Activated CD8-positive, alpha-beta T cell treated with anti-CD3 and anti-CD28 coated beads, Interleukin-2, amount 10 ng/mL, durations not matched to agents 7 days and 5 days (primary cell): ENCODE measurements at regions of chr3 and their contacts with region 1.

Region 1: DNA sequence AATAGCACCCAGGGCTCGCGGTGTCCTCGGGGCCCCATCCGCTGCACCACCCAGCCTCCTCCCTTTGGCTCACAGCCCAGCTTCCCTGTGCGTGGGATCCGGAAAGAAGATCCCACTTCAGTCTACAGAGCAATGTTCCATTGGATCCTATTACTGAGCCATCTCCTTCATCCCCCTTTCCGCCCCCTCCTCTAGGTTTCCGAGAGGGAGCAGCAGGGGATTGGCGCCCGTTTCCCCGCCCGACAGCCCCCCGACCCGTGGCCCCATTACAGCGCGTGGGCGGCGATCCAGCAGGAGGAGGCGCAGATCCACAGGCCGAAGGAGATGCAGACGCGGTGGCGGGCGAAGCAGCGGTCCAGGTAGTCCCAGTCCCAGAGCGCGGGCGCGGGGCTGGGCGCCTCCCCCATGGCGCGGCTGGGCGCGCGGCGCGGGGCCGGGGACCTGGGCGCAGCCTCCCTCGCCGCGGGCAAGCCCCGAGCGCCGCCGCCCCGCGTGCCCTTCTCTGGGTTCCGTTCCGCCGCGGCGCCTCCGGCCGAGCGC is 340 bp downstream of the TMEM44 start:
- DNase-seq: peak; percentile 24
- ATAC-seq: peak; percentile 71
- H3K4me3 Mint-ChIP-seq: peak overlapping the region; percentile 83
- H3K27ac Mint-ChIP-seq: peak overlapping the region; percentile 77
- H3K4me1 Mint-ChIP-seq: peaks cover 16% of the 10 kb centered on the region
- H3K27me3 Mint-ChIP-seq: no peaks in the 10 kb centered on the region

Region 2: GRCh38 chr3:194465920-194466570 is 166.8 kb before region 1 on chr3:
- CTCF ChIA-PET with region 1: no interaction called
- POLR2A ChIA-PET with region 1: no interaction called
- DNase-seq: no peak
- ATAC-seq: no peak
- H3K4me3 Mint-ChIP-seq: no peak overlapping the region
- H3K27ac Mint-ChIP-seq: no peak overlapping the region
- H3K4me1 Mint-ChIP-seq: peaks cover 8% of the 10 kb centered on the region
- H3K27me3 Mint-ChIP-seq: no peaks in the 10 kb centered on the region

Region 3: GRCh38 chr3:194647747-194648146 is 14.9 kb after region 1 on chr3:
- CTCF ChIA-PET with region 1: interaction called, 10 read pairs
- POLR2A ChIA-PET with region 1: interaction called, 3 read pairs
- DNase-seq: no peak
- ATAC-seq: no peak
- H3K4me3 Mint-ChIP-seq: no peak overlapping the region
- H3K27ac Mint-ChIP-seq: no peak overlapping the region
- H3K4me1 Mint-ChIP-seq: no peaks in the 10 kb centered on the region
- H3K27me3 Mint-ChIP-seq: no peaks in the 10 kb centered on the region

Region 4: DNA sequence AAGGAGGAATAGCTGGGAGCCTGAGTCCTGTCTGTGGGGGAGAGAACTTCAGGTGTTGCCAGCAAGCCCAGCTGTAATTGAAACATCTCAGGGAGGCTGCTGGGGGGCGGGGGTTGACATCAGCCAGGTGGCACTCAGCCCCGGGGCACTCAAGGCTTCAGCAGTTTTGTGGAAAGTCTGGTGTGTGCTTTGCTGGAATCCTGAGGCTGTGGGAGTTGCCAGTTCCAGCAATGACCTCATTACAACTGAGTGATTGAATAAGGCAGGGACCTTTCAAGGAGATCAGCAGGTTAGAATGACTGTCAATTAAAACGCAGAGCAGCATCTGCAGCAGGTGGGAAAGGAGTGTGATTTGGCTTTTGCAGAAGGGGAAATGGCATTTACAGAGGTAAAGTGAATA is 128.5 kb after region 1 on chr3:
- CTCF ChIA-PET with region 1: no interaction called
- POLR2A ChIA-PET with region 1: no interaction called
- DNase-seq: no peak
- ATAC-seq: no peak
- H3K4me3 Mint-ChIP-seq: no peak overlapping the region
- H3K27ac Mint-ChIP-seq: no peak overlapping the region
- H3K4me1 Mint-ChIP-seq: no peaks in the 10 kb centered on the region
- H3K27me3 Mint-ChIP-seq: peaks cover 16% of the 10 kb centered on the region